CD8-positive, alpha-beta T cell (primary cell): ENCODE measurements at regions of chr2 and their contacts with region 1.

Region 1: DNA sequence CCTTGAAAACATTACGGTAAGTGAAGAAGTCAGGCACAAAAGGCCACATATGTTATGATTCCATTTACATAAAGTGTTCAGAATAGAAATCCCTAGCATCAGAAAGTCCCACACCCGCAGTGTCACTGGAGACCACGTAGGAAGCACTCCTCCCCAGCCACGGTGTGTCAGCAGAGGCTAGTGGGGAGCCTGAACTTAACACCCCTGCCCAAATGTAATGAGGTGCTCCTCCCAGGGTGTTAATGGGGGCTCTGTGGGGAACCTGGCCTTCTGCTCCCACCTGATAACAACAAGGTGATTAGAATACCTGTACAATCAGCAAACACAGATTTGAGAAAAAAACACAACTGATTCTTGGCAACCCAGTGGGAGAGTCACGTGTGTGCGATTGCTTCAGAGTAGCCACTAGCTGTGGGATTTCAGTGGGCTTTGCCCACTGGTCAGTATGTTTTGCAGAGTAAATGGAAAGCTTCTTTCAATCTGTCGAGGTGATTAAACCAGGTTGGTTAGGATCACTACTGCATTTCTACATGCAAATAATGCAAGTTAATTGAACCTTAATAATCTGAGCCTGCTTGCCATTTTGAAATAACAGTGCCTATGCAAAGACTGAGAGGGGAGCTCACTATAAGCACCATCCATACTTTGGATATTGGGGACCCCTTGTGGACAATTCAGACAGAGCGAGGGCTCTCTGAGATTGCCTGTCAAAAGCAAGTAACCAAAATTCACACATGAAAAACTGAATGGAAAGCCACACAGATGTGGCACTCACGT is 20.6 kb upstream of the ATRAID start:
- DNase-seq: peak in 6 of 9 experiments; percentile 19 to 71 (median 50)
- ATAC-seq: peak; percentile 92
- H3K4me3 ChIP-seq: no peak overlapping the region
- H3K4me3 Mint-ChIP-seq: no peak overlapping the region
- H3K27ac ChIP-seq: no peak overlapping the region
- H3K27ac Mint-ChIP-seq: no peak overlapping the region
- H3K4me1 ChIP-seq: no peaks in the 10 kb centered on the region
- H3K4me1 Mint-ChIP-seq: no peaks in the 10 kb centered on the region
- H3K27me3 ChIP-seq: no peaks in the 10 kb centered on the region
- H3K27me3 Mint-ChIP-seq: peaks cover 9% of the 10 kb centered on the region
- CTCF ChIP-seq: peak; percentile 42

Region 2: GRCh38 chr2:26964446-26965130 is 226.7 kb before region 1 on chr2:
- CTCF ChIA-PET with region 1: interaction called, 34 read pairs
- POLR2A ChIA-PET with region 1: no interaction called
- intact Hi-C with region 1: loop called in 1 of 2 experiments (anchors 1 kb)
- DNase-seq: no peak
- ATAC-seq: no peak
- H3K4me3 ChIP-seq: no peak overlapping the region
- H3K4me3 Mint-ChIP-seq: no peak overlapping the region
- H3K27ac ChIP-seq: no peak overlapping the region
- H3K27ac Mint-ChIP-seq: no peak overlapping the region
- H3K4me1 ChIP-seq: no peaks in the 10 kb centered on the region
- H3K4me1 Mint-ChIP-seq: peaks cover 10% of the 10 kb centered on the region
- H3K27me3 ChIP-seq: no peaks in the 10 kb centered on the region
- H3K27me3 Mint-ChIP-seq: peaks cover 40% of the 10 kb centered on the region
- CTCF ChIP-seq: no peak

Region 3: GRCh38 chr2:27095745-27096651 is 95.2 kb before region 1 on chr2:
- CTCF ChIA-PET with region 1: interaction called, 18 read pairs
- POLR2A ChIA-PET with region 1: no interaction called
- intact Hi-C with region 1: loop called (anchors 1 to 2 kb)
- DNase-seq: peak in 5 of 9 experiments; percentile 32 to 69 (median 57)
- ATAC-seq: peak; percentile 88
- H3K4me3 ChIP-seq: peak overlapping the region; percentile 21 to 42
- H3K4me3 Mint-ChIP-seq: peak overlapping the region; percentile 61
- H3K27ac ChIP-seq: no peak overlapping the region
- H3K27ac Mint-ChIP-seq: no peak overlapping the region
- H3K4me1 ChIP-seq: peaks cover 9% of the 10 kb centered on the region
- H3K4me1 Mint-ChIP-seq: peaks cover 11% of the 10 kb centered on the region
- H3K27me3 ChIP-seq: no peaks in the 10 kb centered on the region
- H3K27me3 Mint-ChIP-seq: no peaks in the 10 kb centered on the region
- CTCF ChIP-seq: no peak

Region 4: GRCh38 chr2:27102329-27102728 is 88.9 kb before region 1 on chr2:
- CTCF ChIA-PET with region 1: interaction called, 18 read pairs
- POLR2A ChIA-PET with region 1: no interaction called
- intact Hi-C with region 1: loop called (anchors 1 to 2 kb)
- DNase-seq: no peak
- ATAC-seq: no peak
- H3K4me3 ChIP-seq: no peak overlapping the region
- H3K4me3 Mint-ChIP-seq: no peak overlapping the region
- H3K27ac ChIP-seq: no peak overlapping the region
- H3K27ac Mint-ChIP-seq: no peak overlapping the region
- H3K4me1 ChIP-seq: no peaks in the 10 kb centered on the region
- H3K4me1 Mint-ChIP-seq: no peaks in the 10 kb centered on the region
- H3K27me3 ChIP-seq: peaks cover 0 to 3% of the 10 kb centered on the region in 2 experiments
- H3K27me3 Mint-ChIP-seq: peaks cover 16% of the 10 kb centered on the region
- CTCF ChIP-seq: no peak